ENCODE measurements at regions of chr5 and their contacts with region 1.

Region 1: GRCh38 chr5:147454996-147455677 is 54.7 kb downstream of the DPYSL3 start:
- DNase-seq: no peak
- H3K4me3 ChIP-seq: peak overlapping the region in 3 of 4 donors; percentile 0 to 82 (median 1)
- H3K27ac ChIP-seq: peak overlapping the region; percentile 72 to 94 (median 89)
- H3K4me1 ChIP-seq: peaks cover 0 to 51% (median 11%) of the 10 kb centered on the region in 3 donors
- H3K27me3 ChIP-seq: peaks cover 0 to 39% (median 0%) of the 10 kb centered on the region in 4 donors
- CTCF ChIP-seq: no peak
- POLR2A ChIP-seq: no peak

Region 2: DNA sequence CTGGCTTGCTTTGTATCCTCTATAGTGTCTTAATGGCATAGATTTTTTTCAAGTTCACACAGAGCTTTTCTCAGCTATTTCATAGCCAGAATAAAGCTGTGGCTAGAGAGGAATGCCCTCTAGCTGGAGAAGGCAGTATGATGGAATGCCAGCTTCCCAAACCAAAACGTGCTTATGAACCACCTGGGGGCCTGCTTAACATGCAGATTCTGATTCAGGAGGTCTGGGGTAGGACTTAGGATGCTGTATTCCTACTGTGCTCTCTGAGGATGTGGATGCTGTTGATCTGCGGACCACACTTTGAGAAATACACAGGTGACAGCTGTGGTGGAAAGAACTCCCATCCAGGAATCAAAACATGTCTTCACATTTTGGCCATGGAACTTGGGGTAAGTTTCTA is 104.6 kb after region 1 on chr5:
- intact Hi-C with region 1: loop called (anchors 5 kb)
- DNase-seq: no peak
- H3K4me3 ChIP-seq: no peak overlapping the region
- H3K27ac ChIP-seq: no peak overlapping the region
- H3K4me1 ChIP-seq: peaks cover 0 to 20% (median 0%) of the 10 kb centered on the region in 3 donors
- H3K27me3 ChIP-seq: no peaks in the 10 kb centered on the region
- CTCF ChIP-seq: no peak
- POLR2A ChIP-seq: no peak